ENCODE measurements at regions of chr9 and their contacts with region 1.

Region 1: DNA sequence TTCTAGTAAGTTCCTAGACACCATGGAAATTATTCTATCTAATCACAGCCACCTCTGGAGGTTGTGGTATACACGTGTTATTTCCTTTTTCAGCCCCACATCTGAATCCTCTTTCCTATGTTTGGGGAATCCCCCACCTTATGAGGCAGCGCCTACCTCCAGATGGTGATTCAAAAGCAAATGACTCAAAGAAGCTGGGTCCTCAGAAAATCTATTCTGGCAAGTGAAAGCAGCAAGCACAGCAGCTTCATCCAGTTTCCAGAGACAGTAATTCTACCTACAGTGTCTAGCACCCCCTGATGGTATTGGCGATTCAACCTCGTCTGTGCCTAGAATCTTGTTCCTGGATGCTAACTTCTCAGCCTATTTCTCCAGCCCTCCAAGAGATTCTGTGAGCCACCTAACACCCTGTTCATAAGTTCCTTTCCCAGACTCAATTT is 43.0 kb downstream of the STRBP start:
- DNase-seq: peak; percentile 29
- ATAC-seq: peak; percentile 80
- H3K4me3 ChIP-seq: no peak overlapping the region
- H3K27ac ChIP-seq: no peak overlapping the region
- H3K4me1 ChIP-seq: peaks cover 23% of the 10 kb centered on the region
- H3K27me3 ChIP-seq: no peaks in the 10 kb centered on the region
- CTCF ChIP-seq: peak; percentile 72
- EP300 ChIP-seq: no peak
- POLR2A ChIP-seq: no peak
- RAD21 ChIP-seq: no peak

Region 2: GRCh38 chr9:123081824-123082223 is 143.6 kb before region 1 on chr9:
- CTCF ChIA-PET with region 1: interaction called, 7 read pairs
- POLR2A ChIA-PET with region 1: no interaction called
- in situ Hi-C with region 1: loop called (anchors 5 kb)
- intact Hi-C with region 1: loop called (anchors 1 kb)
- DNase-seq: peak; percentile 48
- ATAC-seq: peak; percentile 62; the same call in 2 of the 3 replicates
- H3K4me3 ChIP-seq: no peak overlapping the region
- H3K27ac ChIP-seq: no peak overlapping the region
- H3K4me1 ChIP-seq: peaks cover 22% of the 10 kb centered on the region
- H3K27me3 ChIP-seq: no peaks in the 10 kb centered on the region
- CTCF ChIP-seq: peak; percentile 69
- EP300 ChIP-seq: no peak
- POLR2A ChIP-seq: no peak
- RAD21 ChIP-seq: peak; percentile 48; the same call in 1 of the 2 replicates

Measured in HepG2 (cell line).